ENCODE measurements at regions of chr21 and their contacts with region 1.

Region 1: DNA sequence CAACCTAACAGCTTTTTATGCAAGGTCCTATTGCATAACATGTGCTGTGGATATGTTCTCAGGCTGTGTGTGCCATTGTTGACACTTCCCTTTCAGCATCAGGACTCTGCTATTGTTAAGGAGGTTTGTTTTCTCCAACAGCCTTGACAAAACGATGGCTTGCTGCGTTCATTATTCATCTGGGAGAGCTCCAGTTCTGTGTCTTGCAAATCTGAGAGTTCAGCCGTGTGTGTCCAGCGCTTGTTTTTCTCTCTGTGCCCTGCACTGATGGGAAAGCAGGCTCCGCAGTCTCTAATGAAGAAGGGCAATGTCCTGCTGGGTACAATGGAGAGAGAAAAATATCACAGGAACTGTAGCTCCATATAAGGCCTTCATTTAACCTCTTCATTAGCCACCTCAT is 63.7 kb downstream of the CLDN17 start:
- DNase-seq: no peak
- H3K4me3 ChIP-seq: no peak overlapping the region
- H3K27ac ChIP-seq: no peak overlapping the region
- H3K4me1 ChIP-seq: no peaks in the 10 kb centered on the region
- H3K27me3 ChIP-seq: no peaks in the 10 kb centered on the region
- CTCF ChIP-seq: no peak
- POLR2A ChIP-seq: no peak

Region 2: GRCh38 chr21:29221253-29221744 is 881.6 kb before region 1 on chr21:
- intact Hi-C with region 1: loop called (anchors 10 kb)
- DNase-seq: no peak
- H3K4me3 ChIP-seq: no peak overlapping the region
- H3K27ac ChIP-seq: no peak overlapping the region
- H3K4me1 ChIP-seq: peaks cover 6% of the 10 kb centered on the region
- H3K27me3 ChIP-seq: no peaks in the 10 kb centered on the region
- CTCF ChIP-seq: no peak
- POLR2A ChIP-seq: no peak

Region 3: GRCh38 chr21:30605968-30606367 is 503.1 kb after region 1 on chr21:
- intact Hi-C with region 1: no loop called
- DNase-seq: no peak
- H3K4me3 ChIP-seq: no peak overlapping the region
- H3K27ac ChIP-seq: no peak overlapping the region
- H3K4me1 ChIP-seq: no peaks in the 10 kb centered on the region
- H3K27me3 ChIP-seq: no peaks in the 10 kb centered on the region
- CTCF ChIP-seq: no peak
- POLR2A ChIP-seq: no peak

Region 4: GRCh38 chr21:32030146-32030652 is 1927.3 kb after region 1 on chr21:
- intact Hi-C with region 1: loop called (anchors 5 kb)
- DNase-seq: no peak
- H3K4me3 ChIP-seq: no peak overlapping the region
- H3K27ac ChIP-seq: no peak overlapping the region
- H3K4me1 ChIP-seq: no peaks in the 10 kb centered on the region
- H3K27me3 ChIP-seq: no peaks in the 10 kb centered on the region
- CTCF ChIP-seq: no peak
- POLR2A ChIP-seq: no peak

Measured in vagina (tissue), 2 donors.